HEK293 (cell line): ENCODE measurements at regions of chr10 and their contacts with region 1.

Region 1: GRCh38 chr10:58299580-58299979 is 30.6 kb downstream of the CISD1 start:
- H3K4me3 ChIP-seq: no peak overlapping the region
- H3K27ac ChIP-seq: no peak overlapping the region
- H3K4me1 ChIP-seq: peaks cover 9% of the 10 kb centered on the region; the same call in 1 of the 2 replicates
- CTCF ChIP-seq: no peak

Region 2: GRCh38 chr10:58177362-58177947 is 122.1 kb before region 1 on chr10:
- CTCF ChIA-PET with region 1: interaction called, 34 read pairs
- POLR2A ChIA-PET with region 1: no interaction called
- H3K4me3 ChIP-seq: no peak overlapping the region
- H3K27ac ChIP-seq: no peak overlapping the region
- H3K4me1 ChIP-seq: no peaks in the 10 kb centered on the region
- CTCF ChIP-seq: no peak; the same call in 1 of the 2 replicates

Region 3: GRCh38 chr10:58341947-58342346 is 42.4 kb after region 1 on chr10:
- CTCF ChIA-PET with region 1: interaction called, 11 read pairs
- POLR2A ChIA-PET with region 1: no interaction called
- H3K4me3 ChIP-seq: no peak overlapping the region
- H3K27ac ChIP-seq: no peak overlapping the region
- H3K4me1 ChIP-seq: 0 out of 2 replicates have a peak, but pooled peaks cover 3% of the 10 kb centered on the region
- CTCF ChIP-seq: no peak

Region 4: GRCh38 chr10:58384999-58385783 is 85.6 kb after region 1 on chr10 and contains the start of gene TFAM:
- CTCF ChIA-PET with region 1: interaction called, 20 read pairs
- POLR2A ChIA-PET with region 1: no interaction called
- H3K4me3 ChIP-seq: peak within 1 kb of the TSS; percentile 61
- H3K27ac ChIP-seq: peak within 1 kb of the TSS; percentile 89
- H3K4me1 ChIP-seq: no peaks in the 10 kb centered on the region
- CTCF ChIP-seq: peak; percentile 96

Region 5: GRCh38 chr10:58393317-58393716 is 93.7 kb after region 1 on chr10:
- CTCF ChIA-PET with region 1: interaction called, 18 read pairs
- POLR2A ChIA-PET with region 1: no interaction called
- H3K4me3 ChIP-seq: no peak overlapping the region
- H3K27ac ChIP-seq: no peak overlapping the region
- H3K4me1 ChIP-seq: no peaks in the 10 kb centered on the region
- CTCF ChIP-seq: no peak

Region 6: DNA sequence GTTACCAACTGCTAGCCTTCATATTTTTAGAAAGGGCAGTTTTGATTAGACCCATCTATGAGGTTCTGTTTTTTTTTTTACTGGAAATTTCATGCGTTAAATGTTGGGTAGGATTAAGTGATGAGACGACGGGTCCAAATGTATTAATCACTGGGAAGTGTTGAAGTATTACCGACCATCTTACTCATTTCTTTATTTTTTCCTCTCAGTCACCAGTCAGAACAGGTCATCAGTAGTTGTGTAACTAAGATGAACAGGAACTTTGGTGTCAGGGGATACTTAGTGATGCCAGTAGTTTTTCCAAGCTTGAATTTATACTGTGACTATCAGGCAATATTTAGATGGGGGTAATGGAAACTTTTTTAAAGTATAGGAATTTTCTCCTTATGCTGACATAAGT is 99.8 kb after region 1 on chr10:
- CTCF ChIA-PET with region 1: interaction called, 12 read pairs
- POLR2A ChIA-PET with region 1: no interaction called
- H3K4me3 ChIP-seq: no peak overlapping the region
- H3K27ac ChIP-seq: no peak overlapping the region
- H3K4me1 ChIP-seq: peaks cover 4% of the 10 kb centered on the region; the same call in 1 of the 2 replicates
- CTCF ChIP-seq: no peak

Region 7: GRCh38 chr10:58531084-58531695 is 231.6 kb after region 1 on chr10:
- CTCF ChIA-PET with region 1: interaction called, 10 read pairs
- POLR2A ChIA-PET with region 1: no interaction called
- H3K4me3 ChIP-seq: no peak overlapping the region
- H3K27ac ChIP-seq: no peak overlapping the region
- H3K4me1 ChIP-seq: no peaks in the 10 kb centered on the region
- CTCF ChIP-seq: no peak